Vagina (tissue), 2 donors: ENCODE measurements at regions of chr9 and their contacts with region 1.

Region 1: GRCh38 chr9:95510709-95511615 is 5.8 kb downstream of the PTCH1 start:
- DNase-seq: no peak
- H3K4me3 ChIP-seq: peak overlapping the region; percentile 76 to 87
- H3K27ac ChIP-seq: peak overlapping the region; percentile 93
- H3K4me1 ChIP-seq: peaks cover 17% of the 10 kb centered on the region
- H3K27me3 ChIP-seq: no peaks in the 10 kb centered on the region
- CTCF ChIP-seq: no peak
- POLR2A ChIP-seq: peak in 1 of 2 donors; percentile 82

Region 2: DNA sequence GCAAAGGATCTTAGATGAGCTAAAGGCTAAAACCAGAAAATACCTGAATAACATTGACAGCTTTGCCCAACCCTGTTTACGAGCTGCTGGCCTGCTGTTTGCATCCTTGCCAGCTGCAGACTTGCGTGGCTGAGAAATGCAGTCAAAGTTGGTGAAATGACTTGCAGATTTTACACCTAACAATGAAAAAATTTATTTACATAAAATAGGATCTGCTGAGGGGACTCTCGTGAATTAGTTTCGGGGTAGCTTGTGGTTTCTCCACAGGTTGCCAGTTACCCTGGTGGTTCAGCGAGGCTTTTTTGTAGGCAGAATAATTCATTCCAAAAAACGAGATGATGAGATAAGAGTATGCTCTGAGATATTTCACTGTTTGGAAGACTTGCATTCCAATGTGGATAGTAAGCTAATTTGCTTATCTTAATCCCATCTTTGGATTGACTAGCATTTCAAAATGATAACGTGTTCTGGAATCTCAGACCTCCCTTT is 127.7 kb before region 1 on chr9:
- intact Hi-C with region 1: no loop called
- DNase-seq: no peak
- H3K4me3 ChIP-seq: no peak overlapping the region
- H3K27ac ChIP-seq: no peak overlapping the region
- H3K4me1 ChIP-seq: no peaks in the 10 kb centered on the region
- H3K27me3 ChIP-seq: no peaks in the 10 kb centered on the region
- CTCF ChIP-seq: no peak
- POLR2A ChIP-seq: no peak

Region 3: DNA sequence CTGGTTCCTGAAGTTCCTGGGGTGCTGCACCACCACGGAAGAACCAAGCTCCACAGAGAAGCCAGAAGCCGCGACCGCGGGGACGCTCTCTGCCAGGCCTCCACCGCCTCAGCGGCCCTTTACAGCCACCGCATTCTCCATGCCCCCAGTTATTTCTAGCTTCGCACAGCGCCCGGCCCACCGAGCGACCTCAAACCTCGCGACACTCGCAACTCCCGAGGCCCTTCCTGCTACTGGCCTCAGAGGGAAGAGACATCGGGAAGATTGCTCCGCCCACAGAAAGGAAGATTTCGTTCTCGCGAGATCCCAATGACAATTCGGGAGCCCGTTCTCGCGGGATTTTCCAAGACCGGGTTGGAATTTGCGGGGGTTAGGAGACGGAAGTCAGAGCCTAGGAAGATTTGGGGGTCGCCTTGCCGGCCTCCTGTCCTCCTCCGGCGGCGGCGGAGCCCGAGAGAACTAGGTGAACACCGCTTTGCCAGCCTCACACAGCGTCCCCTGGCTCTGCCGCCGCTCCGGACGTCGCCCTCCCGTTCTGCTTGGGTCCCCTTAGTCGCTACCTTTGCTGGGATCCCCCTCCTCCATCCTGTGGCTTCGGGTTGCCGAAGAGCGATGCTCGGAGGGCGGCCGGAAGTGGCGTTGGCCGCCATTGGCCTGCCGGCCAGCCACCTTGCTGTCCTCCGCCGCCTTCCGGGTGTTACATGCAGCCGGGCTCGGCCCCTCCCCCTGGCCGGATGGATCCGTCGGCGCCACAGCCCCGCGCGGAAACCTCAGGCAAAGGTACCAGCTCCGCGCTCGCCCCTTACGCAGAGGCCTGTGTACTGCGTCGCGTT is 364.6 kb after region 1 on chr9 and contains the start of gene ERCC6L2:
- intact Hi-C with region 1: loop called (anchors 5 kb)
- DNase-seq: peak in 1 of 2 donors; percentile 93
- H3K4me3 ChIP-seq: no peak within 1 kb of the TSS
- H3K27ac ChIP-seq: no peak within 1 kb of the TSS
- H3K4me1 ChIP-seq: peaks cover 26% of the 10 kb centered on the region
- H3K27me3 ChIP-seq: no peaks in the 10 kb centered on the region
- CTCF ChIP-seq: peak in 1 of 3 experiments; percentile 13
- POLR2A ChIP-seq: peak in 1 of 2 donors; percentile 57
- total RNA-seq, gene ERCC6L2: 59.2 TPM

Region 4: GRCh38 chr9:96217754-96218693 is 707.1 kb after region 1 on chr9:
- intact Hi-C with region 1: loop called (anchors 10 kb)
- DNase-seq: no peak
- H3K4me3 ChIP-seq: peak overlapping the region; percentile 25 to 36
- H3K27ac ChIP-seq: peak overlapping the region; percentile 51
- H3K4me1 ChIP-seq: peaks cover 15% of the 10 kb centered on the region
- H3K27me3 ChIP-seq: no peaks in the 10 kb centered on the region
- CTCF ChIP-seq: peak; percentile 75 to 100 (median 96)
- POLR2A ChIP-seq: no peak